ENCODE measurements at regions of chr3 and their contacts with region 1.

Region 1: DNA sequence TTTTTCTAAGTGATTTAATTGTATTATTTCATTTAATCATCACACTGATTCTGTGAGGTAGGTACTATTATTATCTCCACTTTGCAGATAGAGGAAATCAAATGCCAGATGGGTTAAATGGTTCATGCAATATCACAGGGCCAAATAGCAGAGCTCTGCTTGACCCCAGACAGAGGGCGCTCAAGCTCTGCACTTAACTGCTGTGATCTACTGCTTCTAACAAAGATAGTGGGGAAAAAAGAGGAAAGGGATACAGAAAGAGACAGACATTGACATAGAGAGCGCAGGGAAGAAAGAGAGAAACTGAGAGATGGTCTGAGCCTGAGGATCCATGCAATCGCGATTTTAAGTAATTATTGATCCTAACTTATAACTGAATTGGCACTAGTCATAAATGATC is 279.1 kb upstream of the THRB start:
- DNase-seq: peak; percentile 66
- H3K4me3 ChIP-seq: no peak overlapping the region
- H3K27ac ChIP-seq: no peak overlapping the region
- H3K4me1 ChIP-seq: no peaks in the 10 kb centered on the region
- H3K27me3 ChIP-seq: peaks cover 15% of the 10 kb centered on the region
- CTCF ChIP-seq: peak; percentile 86

Region 2: GRCh38 chr3:25000971-25001591 is 227.3 kb after region 1 on chr3:
- CTCF ChIA-PET with region 1: no interaction called
- POLR2A ChIA-PET with region 1: no interaction called
- intact Hi-C with region 1: no loop called
- DNase-seq: no peak
- H3K4me3 ChIP-seq: no peak overlapping the region
- H3K27ac ChIP-seq: no peak overlapping the region
- H3K4me1 ChIP-seq: no peaks in the 10 kb centered on the region
- H3K27me3 ChIP-seq: no peaks in the 10 kb centered on the region
- CTCF ChIP-seq: no peak

Region 3: DNA sequence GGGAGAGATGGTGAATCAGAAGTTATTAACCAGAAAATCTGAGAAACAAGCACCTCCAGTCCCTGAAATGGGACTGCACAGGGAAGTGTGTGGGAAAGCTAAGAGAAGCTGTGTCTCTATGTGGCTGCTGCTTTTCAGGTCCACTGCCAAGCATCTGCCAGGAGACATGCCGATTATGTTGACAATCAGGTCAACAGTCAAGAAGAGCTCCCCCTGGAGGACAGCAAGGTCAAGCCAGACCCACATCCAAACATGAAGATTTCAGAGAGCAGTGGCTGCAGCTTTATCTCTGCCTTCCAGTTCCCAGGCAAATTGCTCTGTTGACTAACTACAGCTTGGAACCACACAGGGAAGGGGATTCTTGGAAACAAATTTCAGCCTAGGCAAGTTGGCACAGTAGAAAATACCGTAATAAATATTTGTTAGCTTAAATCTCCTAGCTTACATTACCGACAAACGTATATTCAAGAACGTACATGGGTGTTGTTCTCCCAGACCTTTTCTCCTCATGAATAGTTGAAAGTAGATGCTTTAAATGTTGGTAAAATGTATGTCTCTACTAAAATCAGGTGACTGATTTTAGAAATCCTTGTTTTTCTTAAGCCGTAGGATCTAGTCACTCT is 259.7 kb after region 1 on chr3:
- CTCF ChIA-PET with region 1: interaction called, 6 read pairs
- POLR2A ChIA-PET with region 1: no interaction called
- intact Hi-C with region 1: loop called (anchors 1 kb)
- DNase-seq: peak; percentile 67
- H3K4me3 ChIP-seq: no peak overlapping the region
- H3K27ac ChIP-seq: no peak overlapping the region
- H3K4me1 ChIP-seq: no peaks in the 10 kb centered on the region
- H3K27me3 ChIP-seq: no peaks in the 10 kb centered on the region
- CTCF ChIP-seq: peak; percentile 75

Region 4: GRCh38 chr3:25856902-25857518 is 1083.2 kb after region 1 on chr3:
- CTCF ChIA-PET with region 1: no interaction called
- POLR2A ChIA-PET with region 1: no interaction called
- intact Hi-C with region 1: loop called (anchors 10 kb)
- DNase-seq: peak; percentile 66
- H3K4me3 ChIP-seq: no peak overlapping the region
- H3K27ac ChIP-seq: no peak overlapping the region
- H3K4me1 ChIP-seq: no peaks in the 10 kb centered on the region
- H3K27me3 ChIP-seq: no peaks in the 10 kb centered on the region
- CTCF ChIP-seq: peak; percentile 88

Measured in A673 (cell line).